ENCODE measurements at regions of chr3 and their contacts with region 1.

Region 1: DNA sequence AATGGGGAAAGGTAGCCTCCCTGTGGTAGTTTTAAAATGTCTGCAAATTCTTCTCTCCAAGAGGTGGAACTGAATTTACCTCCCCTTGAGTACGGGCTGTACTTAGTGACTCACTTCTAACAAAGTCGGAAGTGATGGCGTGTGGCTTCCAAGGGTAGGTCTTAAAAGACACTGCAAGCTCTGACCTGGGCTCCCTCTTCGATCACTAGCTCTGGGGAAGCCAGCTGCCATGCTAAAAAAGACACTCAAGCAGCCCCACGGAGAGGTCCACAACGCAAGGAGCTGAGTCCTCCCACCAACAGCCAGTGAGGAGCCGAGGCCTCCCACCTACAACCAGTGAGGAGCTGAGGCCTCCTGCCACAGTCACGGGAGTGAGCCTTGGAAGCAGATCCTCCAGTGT is 122.0 kb upstream of the HACD2 start:
- DNase-seq: no peak
- ATAC-seq: no peak
- H3K4me3 ChIP-seq: no peak overlapping the region
- H3K27ac ChIP-seq: no peak overlapping the region
- H3K4me1 ChIP-seq: no peaks in the 10 kb centered on the region
- H3K27me3 ChIP-seq: no peaks in the 10 kb centered on the region
- CTCF ChIP-seq: no peak

Region 2: DNA sequence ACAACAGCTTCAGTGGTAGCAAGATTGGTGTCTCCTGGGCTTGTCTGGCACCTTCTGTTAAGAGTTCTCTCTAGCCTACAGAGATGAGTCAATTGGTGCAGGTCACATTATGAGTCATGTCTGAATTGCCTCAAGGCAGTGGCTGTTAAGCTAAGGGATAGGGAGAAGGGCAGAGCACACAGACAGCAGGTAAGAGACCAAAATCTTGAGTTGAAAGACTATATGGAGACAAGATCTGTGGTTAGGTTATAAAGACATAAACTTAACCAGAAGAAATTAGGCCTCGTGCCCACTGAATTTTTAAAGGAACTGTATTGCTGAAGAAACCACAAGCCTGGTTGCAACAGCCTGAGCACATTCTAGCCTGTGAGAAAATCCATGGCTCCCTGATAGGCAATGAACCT is 1172.9 kb before region 1 on chr3:
- CTCF ChIA-PET with region 1: interaction called, 12 read pairs
- POLR2A ChIA-PET with region 1: no interaction called
- in situ Hi-C with region 1: no loop called
- intact Hi-C with region 1: no loop called
- DNase-seq: peak; percentile 76
- ATAC-seq: peak; percentile 100
- H3K4me3 ChIP-seq: no peak overlapping the region
- H3K27ac ChIP-seq: no peak overlapping the region
- H3K4me1 ChIP-seq: peaks cover 4% of the 10 kb centered on the region; the same call in 1 of the 2 replicates
- H3K27me3 ChIP-seq: no peaks in the 10 kb centered on the region
- CTCF ChIP-seq: no peak

Measured in Panc1 (cell line).